ENCODE measurements at regions of chr5 and their contacts with region 1.

Region 1: DNA sequence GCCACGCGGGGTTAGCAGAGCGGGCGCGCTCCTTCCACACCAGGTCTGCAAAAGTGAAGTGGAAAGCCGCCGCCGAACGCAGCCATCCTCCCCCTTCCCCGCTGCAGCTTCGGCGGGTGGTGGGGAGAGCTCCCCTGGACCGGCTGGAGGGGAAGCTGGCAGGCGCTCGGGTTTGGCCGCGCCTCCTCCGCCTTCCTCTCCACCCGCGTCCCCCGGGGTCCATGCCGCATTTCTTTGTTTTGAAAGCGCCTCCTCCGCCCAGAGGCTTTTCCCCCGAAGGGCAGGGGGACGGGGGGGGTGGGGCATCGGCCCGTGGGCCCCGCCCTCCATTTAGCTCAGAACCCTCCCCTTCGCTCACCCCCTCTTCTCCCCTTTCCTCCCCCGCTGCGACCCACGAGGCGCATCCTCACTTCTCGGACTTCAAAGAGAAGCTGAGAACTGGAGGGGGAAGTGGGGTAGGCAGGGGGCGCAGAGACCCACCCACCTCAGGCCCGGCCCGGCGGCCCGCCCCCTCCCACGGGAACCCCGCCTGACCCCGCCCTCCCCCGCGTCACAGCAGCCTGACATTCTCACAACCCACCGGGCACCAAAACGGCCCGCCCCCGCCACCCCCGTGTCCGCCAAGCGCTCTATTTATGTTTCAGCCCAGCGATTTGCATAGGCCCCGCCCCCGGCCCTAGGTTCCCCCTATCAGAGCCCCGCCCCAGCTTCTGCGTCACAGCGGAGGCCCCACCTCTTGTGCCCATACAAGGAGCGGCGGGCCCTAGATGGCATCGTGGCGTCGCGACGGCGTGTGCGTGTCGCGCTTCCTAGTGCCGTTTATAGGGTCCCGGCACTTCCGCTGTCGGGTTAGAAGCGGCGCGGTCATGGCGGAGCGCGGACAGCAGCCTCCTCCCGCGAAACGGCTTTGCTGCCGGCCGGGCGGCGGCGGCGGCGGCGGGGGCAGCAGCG is at the start of gene ZSWIM6:
- DNase-seq: peak; percentile 98 to 99
- H3K4me3 ChIP-seq: peak within 1 kb of the TSS; percentile 100
- H3K4me3 Mint-ChIP-seq: peak within 1 kb of the TSS; percentile 79
- H3K27ac Mint-ChIP-seq: peak within 1 kb of the TSS; percentile 93
- H3K4me1 ChIP-seq: no peaks in the 10 kb centered on the region
- H3K4me1 Mint-ChIP-seq: peaks cover 34% of the 10 kb centered on the region
- H3K27me3 ChIP-seq: no peaks in the 10 kb centered on the region
- H3K27me3 Mint-ChIP-seq: no peaks in the 10 kb centered on the region
- CTCF ChIP-seq: peak in 1 of 2 experiments; percentile 8
- total RNA-seq, gene ZSWIM6: 10.0 and 10.7 TPM in 2 replicates

Region 2: DNA sequence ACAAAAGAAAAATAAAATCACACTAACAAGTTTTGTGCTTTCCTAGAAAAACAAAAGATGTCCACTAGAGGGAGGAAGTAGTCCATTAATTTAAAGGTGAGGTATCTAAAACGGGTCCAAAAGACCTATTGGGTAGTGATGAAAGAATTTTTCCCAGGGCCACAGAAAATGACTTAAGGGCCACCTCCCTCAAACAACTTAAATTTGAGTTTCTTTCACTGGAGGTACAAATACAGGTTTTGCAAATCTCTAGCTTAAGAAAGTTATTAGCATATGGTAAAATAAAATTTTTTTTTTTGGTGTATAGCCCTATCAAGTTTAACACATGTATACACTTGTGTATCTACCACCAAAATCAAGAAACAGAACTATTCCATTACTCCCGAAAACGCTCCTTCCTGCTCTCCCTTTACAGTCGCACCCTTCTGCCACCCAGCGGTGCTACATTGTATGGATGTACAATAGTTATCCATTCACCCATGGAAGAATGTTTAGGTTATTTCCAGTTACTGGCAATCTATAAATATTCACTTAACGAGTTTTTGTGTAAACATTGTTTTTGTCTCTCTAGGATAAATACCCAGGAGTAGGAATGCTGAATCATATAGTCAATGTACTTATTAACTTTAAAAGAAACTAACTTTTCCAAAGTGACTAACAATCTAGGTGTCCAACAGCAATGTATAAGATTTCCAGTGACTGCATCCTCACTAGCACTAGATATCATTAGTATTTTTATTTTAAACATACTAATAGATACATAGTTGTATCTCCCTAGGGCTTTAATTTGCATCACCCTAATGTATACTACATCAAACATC is 653.6 kb before region 1 on chr5:
- CTCF ChIA-PET with region 1: no interaction called
- POLR2A ChIA-PET with region 1: no interaction called
- intact Hi-C with region 1: loop called (anchors 10 kb)
- DNase-seq: peak; percentile 50 to 64
- H3K4me3 ChIP-seq: no peak overlapping the region
- H3K4me3 Mint-ChIP-seq: peak overlapping the region; percentile 56
- H3K27ac Mint-ChIP-seq: peak overlapping the region; percentile 31
- H3K4me1 ChIP-seq: peaks cover 50% of the 10 kb centered on the region
- H3K4me1 Mint-ChIP-seq: peaks cover 65% of the 10 kb centered on the region
- H3K27me3 ChIP-seq: no peaks in the 10 kb centered on the region
- H3K27me3 Mint-ChIP-seq: no peaks in the 10 kb centered on the region
- CTCF ChIP-seq: peak; percentile 36 to 67

Region 3: DNA sequence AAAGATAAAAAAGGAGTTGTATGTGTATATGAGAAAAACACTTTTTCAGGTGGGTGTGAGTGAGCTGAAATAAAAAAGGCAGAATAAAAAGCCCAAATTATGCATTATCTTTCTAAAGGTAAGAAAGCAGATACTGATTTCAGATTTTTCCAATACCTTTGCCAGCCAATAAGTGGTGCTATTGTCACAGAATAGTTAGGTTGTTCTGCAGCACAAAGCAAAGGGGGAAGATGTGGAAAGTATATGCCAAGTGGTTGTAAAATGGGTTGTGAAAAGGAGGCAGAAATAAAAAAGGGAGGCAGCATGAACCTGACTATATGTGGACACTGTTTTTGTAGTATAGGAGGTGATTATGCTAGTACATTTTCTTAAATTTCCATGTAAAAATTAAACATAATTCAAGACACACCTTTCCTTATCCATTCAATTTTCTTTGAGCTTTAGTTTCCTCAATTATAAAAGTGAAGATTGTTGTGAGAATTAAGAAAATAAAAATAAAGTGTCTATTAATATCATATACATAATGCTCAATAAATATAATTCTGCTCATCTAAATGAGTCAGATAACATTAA is 276.2 kb before region 1 on chr5:
- CTCF ChIA-PET with region 1: interaction called, 3 read pairs
- POLR2A ChIA-PET with region 1: no interaction called
- intact Hi-C with region 1: loop called (anchors 1 kb)
- DNase-seq: peak in 1 of 2 experiments; percentile 43
- H3K4me3 ChIP-seq: no peak overlapping the region
- H3K4me3 Mint-ChIP-seq: no peak overlapping the region
- H3K27ac Mint-ChIP-seq: no peak overlapping the region
- H3K4me1 ChIP-seq: peaks cover 26% of the 10 kb centered on the region
- H3K4me1 Mint-ChIP-seq: peaks cover 19% of the 10 kb centered on the region
- H3K27me3 ChIP-seq: no peaks in the 10 kb centered on the region
- H3K27me3 Mint-ChIP-seq: no peaks in the 10 kb centered on the region
- CTCF ChIP-seq: peak; percentile 73 to 78

Region 4: DNA sequence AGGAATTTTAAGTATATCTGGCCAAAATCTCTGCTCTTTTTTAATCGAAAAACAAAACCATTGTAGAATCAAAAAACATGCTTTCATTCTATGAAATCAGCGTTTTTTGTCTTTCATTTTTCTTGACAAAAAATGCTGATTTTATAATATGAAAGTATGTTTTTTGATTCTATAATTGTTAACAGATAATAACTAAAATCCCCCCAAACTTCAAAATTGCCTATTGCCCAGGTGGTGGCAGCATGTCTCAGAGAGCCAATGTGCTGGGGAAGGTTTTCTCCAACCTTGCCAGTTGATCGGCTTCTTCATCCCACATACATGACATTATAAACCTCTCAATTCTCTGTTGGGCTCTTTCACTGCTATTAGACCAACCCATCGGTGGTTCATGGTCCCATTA is 164.3 kb before region 1 on chr5:
- CTCF ChIA-PET with region 1: no interaction called
- POLR2A ChIA-PET with region 1: interaction called, 8 read pairs
- intact Hi-C with region 1: loop called (anchors 1 kb)
- DNase-seq: peak in 1 of 2 experiments; percentile 12
- H3K4me3 ChIP-seq: no peak overlapping the region
- H3K4me3 Mint-ChIP-seq: no peak overlapping the region
- H3K27ac Mint-ChIP-seq: no peak overlapping the region
- H3K4me1 ChIP-seq: peaks cover 8% of the 10 kb centered on the region; the same call in 1 of the 2 replicates
- H3K4me1 Mint-ChIP-seq: peaks cover 14% of the 10 kb centered on the region
- H3K27me3 ChIP-seq: no peaks in the 10 kb centered on the region
- H3K27me3 Mint-ChIP-seq: no peaks in the 10 kb centered on the region
- CTCF ChIP-seq: peak; percentile 12 to 39

Region 5: GRCh38 chr5:61277190-61277589 is 54.5 kb before region 1 on chr5:
- CTCF ChIA-PET with region 1: interaction called, 9 read pairs
- POLR2A ChIA-PET with region 1: interaction called, 3 read pairs
- intact Hi-C with region 1: loop called (anchors 1 kb)
- DNase-seq: peak; percentile 37 to 45
- H3K4me3 ChIP-seq: no peak overlapping the region
- H3K4me3 Mint-ChIP-seq: no peak overlapping the region
- H3K27ac Mint-ChIP-seq: peak overlapping the region; percentile 40
- H3K4me1 ChIP-seq: peaks cover 10% of the 10 kb centered on the region
- H3K4me1 Mint-ChIP-seq: peaks cover 29% of the 10 kb centered on the region
- H3K27me3 ChIP-seq: no peaks in the 10 kb centered on the region
- H3K27me3 Mint-ChIP-seq: no peaks in the 10 kb centered on the region
- CTCF ChIP-seq: peak in 1 of 2 experiments; percentile 60

Region 6: DNA sequence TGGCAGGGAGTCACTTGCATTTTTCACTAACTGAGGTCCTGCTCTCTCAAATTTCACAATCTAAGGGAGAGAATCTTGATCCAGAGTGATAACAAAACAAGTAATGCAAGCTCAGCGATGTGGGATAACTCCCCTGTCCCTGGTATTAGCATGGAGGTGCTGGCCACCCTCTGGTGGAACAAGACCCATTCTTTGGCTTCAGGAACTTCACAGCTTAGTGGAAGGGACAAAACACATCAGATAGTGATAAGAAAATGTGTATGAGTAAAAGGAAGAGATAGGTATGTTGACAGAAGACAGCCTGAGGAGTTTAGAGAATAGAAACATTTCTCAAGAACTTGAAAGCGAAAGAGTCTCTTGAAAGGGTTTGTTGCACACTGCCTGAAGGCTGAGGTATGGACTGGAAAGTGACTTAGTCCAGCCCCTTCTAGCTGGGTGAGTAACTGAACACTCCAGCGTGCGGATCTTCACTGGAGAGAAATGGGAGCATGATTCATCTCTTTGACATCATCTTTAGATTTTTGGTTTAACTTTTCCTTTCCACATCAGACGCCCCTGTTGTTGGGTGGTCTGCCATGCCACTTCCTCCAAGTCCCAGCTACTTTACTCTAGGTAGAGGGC is 25.1 kb before region 1 on chr5:
- CTCF ChIA-PET with region 1: interaction called, 5 read pairs
- POLR2A ChIA-PET with region 1: interaction called, 43 read pairs
- intact Hi-C with region 1: loop called (anchors 1 kb)
- DNase-seq: peak; percentile 69 to 72
- H3K4me3 ChIP-seq: no peak overlapping the region
- H3K4me3 Mint-ChIP-seq: peak overlapping the region; percentile 8
- H3K27ac Mint-ChIP-seq: peak overlapping the region; percentile 30
- H3K4me1 ChIP-seq: peaks cover 74% of the 10 kb centered on the region
- H3K4me1 Mint-ChIP-seq: peaks cover 56% of the 10 kb centered on the region
- H3K27me3 ChIP-seq: no peaks in the 10 kb centered on the region
- H3K27me3 Mint-ChIP-seq: no peaks in the 10 kb centered on the region
- CTCF ChIP-seq: no peak

Region 7: DNA sequence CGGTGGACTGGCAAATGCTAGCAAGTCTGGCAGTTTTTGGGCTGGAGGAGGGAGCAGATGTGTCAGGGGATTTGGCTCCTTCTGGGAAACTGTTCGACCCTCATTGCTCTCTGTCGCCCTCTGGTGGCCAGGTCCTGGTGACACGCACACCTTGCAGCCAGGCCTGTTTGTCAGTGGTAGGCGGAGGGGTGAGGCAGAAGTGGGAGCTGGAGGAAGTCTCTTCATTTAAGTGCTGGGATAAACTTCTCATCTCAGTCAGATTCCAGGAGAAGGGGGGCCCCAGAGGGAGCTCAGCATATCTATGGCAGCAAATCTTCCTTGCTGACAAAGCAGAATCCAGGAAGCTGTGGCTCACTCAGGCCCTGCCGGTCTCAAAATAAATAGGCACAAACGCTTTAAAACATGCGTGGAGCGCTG is 326.9 kb after region 1 on chr5:
- CTCF ChIA-PET with region 1: interaction called, 3 read pairs
- POLR2A ChIA-PET with region 1: no interaction called
- intact Hi-C with region 1: loop called (anchors 1 kb)
- DNase-seq: peak; percentile 78 to 87
- H3K4me3 ChIP-seq: no peak overlapping the region
- H3K4me3 Mint-ChIP-seq: no peak overlapping the region
- H3K27ac Mint-ChIP-seq: no peak overlapping the region
- H3K4me1 ChIP-seq: no peaks in the 10 kb centered on the region
- H3K4me1 Mint-ChIP-seq: no peaks in the 10 kb centered on the region
- H3K27me3 ChIP-seq: no peaks in the 10 kb centered on the region
- H3K27me3 Mint-ChIP-seq: peaks cover 16% of the 10 kb centered on the region
- CTCF ChIP-seq: peak; percentile 96

Measured in Caco-2 (cell line).